SK-N-SH (cell line): ENCODE measurements at regions of chr7 and their contacts with region 1.

Region 1: GRCh38 chr7:106176414-106177299 is 64.5 kb upstream of the SYPL1 start:
- DNase-seq: peak; percentile 88
- H3K4me3 ChIP-seq: no peak overlapping the region
- H3K27ac ChIP-seq: no peak overlapping the region
- H3K4me1 ChIP-seq: peaks cover 4 to 7% of the 10 kb centered on the region in 2 experiments; a peak in 2 of 4 replicates
- H3K27me3 ChIP-seq: no peaks in the 10 kb centered on the region
- CTCF ChIP-seq: peak; percentile 99
- EP300 ChIP-seq: no peak
- RAD21 ChIP-seq: peak; percentile 100

Region 2: GRCh38 chr7:106153891-106154449 is 22.7 kb before region 1 on chr7:
- CTCF ChIA-PET with region 1: interaction called, 199 read pairs
- POLR2A ChIA-PET with region 1: no interaction called
- DNase-seq: peak; percentile 86
- H3K4me3 ChIP-seq: no peak overlapping the region; a peak in 1 of 4 replicates
- H3K27ac ChIP-seq: no peak overlapping the region
- H3K4me1 ChIP-seq: peaks cover 10 to 19% of the 10 kb centered on the region in 2 experiments; a peak in 2 of 4 replicates
- H3K27me3 ChIP-seq: no peaks in the 10 kb centered on the region; the same call in 1 of the 2 replicates
- CTCF ChIP-seq: peak; percentile 100
- EP300 ChIP-seq: no peak
- RAD21 ChIP-seq: peak; percentile 100

Region 3: GRCh38 chr7:106216517-106216922 is 39.9 kb after region 1 on chr7:
- CTCF ChIA-PET with region 1: interaction called, 22 read pairs
- POLR2A ChIA-PET with region 1: no interaction called
- DNase-seq: no peak
- H3K4me3 ChIP-seq: peak overlapping the region in 1 of 2 experiments; percentile 4; a peak in 1 of 4 replicates
- H3K27ac ChIP-seq: peak overlapping the region; percentile 28 to 92; a peak in 3 of 4 replicates
- H3K4me1 ChIP-seq: peaks cover 4 to 15% of the 10 kb centered on the region in 2 experiments; a peak in 3 of 4 replicates
- H3K27me3 ChIP-seq: no peaks in the 10 kb centered on the region
- CTCF ChIP-seq: no peak
- EP300 ChIP-seq: peak in 1 of 2 experiments; percentile 96; a peak in 2 of 4 replicates
- RAD21 ChIP-seq: no peak

Region 4: DNA sequence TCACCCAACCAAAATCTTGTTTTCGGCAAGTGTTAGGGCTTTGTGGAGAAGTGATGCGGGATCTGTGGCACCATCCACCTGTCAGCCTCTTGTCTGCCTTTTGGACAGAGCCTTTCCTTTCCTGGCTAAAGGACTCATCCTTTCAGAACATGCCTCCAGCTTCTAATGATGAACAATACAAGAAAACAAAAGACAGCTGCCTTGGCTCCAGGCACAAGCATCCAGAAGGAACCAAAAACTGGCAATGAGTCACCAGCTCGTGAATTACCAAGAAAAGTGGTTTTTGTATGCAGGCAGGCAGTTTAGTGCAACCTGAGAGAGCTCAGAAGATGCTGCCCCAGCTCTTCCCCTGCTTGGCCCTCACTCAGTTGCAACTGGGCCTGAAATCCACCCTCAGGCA is 192.7 kb after region 1 on chr7:
- CTCF ChIA-PET with region 1: interaction called, 10 read pairs
- POLR2A ChIA-PET with region 1: no interaction called
- DNase-seq: no peak
- H3K4me3 ChIP-seq: no peak overlapping the region
- H3K27ac ChIP-seq: no peak overlapping the region
- H3K4me1 ChIP-seq: peaks cover 0 to 3% of the 10 kb centered on the region in 2 experiments; a peak in 1 of 4 replicates
- H3K27me3 ChIP-seq: no peaks in the 10 kb centered on the region
- CTCF ChIP-seq: no peak
- EP300 ChIP-seq: no peak
- RAD21 ChIP-seq: no peak

Region 5: DNA sequence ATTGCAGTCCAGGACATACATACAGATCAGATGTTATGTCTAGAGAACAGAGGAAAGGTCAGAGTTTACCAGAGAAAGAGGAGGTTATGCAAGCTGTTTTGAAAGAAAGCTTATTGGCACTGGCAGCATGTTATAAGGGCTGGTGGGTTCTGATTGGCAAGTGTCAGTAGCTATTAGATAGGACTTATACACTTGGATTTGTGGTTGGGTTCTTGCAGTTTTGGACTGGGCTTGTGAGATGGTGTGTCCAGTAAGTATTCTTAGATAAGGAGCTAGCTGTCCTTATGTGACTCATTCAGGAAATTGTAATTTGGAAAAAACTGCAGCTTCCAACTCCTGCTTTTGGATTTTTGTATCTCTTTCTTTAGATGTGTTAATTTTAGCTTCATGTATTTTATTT is 238.8 kb after region 1 on chr7:
- CTCF ChIA-PET with region 1: interaction called, 15 read pairs
- POLR2A ChIA-PET with region 1: no interaction called
- DNase-seq: no peak
- H3K4me3 ChIP-seq: no peak overlapping the region
- H3K27ac ChIP-seq: no peak overlapping the region
- H3K4me1 ChIP-seq: no peaks in the 10 kb centered on the region
- H3K27me3 ChIP-seq: no peaks in the 10 kb centered on the region
- CTCF ChIP-seq: no peak
- EP300 ChIP-seq: no peak
- RAD21 ChIP-seq: no peak

Region 6: DNA sequence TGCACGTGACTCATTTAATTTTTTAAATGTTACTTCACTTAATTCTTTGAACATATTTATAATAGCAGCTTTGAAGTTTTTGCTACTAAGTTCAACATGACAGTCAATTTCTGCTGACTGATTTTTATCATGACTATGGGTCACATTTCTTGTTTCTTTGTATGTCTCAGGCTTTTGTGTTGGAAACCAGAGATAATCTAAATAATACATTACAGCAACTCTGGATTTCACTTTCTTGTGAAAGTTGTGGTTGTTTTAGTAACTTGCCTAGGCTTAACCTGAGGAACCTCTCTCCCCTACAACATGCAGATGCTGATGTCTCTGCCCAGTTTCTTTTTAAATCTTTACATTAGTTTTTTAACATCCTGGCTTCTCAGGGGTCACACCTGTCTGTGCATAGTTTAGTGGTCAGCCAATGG is 303.5 kb after region 1 on chr7:
- CTCF ChIA-PET with region 1: interaction called, 12 read pairs
- POLR2A ChIA-PET with region 1: no interaction called
- DNase-seq: no peak
- H3K4me3 ChIP-seq: no peak overlapping the region
- H3K27ac ChIP-seq: no peak overlapping the region
- H3K4me1 ChIP-seq: peaks cover 0 to 6% of the 10 kb centered on the region in 2 experiments
- H3K27me3 ChIP-seq: no peaks in the 10 kb centered on the region
- CTCF ChIP-seq: no peak
- EP300 ChIP-seq: no peak
- RAD21 ChIP-seq: no peak

Region 7: GRCh38 chr7:106757846-106758245 is 581.2 kb after region 1 on chr7:
- CTCF ChIA-PET with region 1: interaction called, 12 read pairs
- POLR2A ChIA-PET with region 1: no interaction called
- DNase-seq: no peak
- H3K4me3 ChIP-seq: no peak overlapping the region
- H3K27ac ChIP-seq: no peak overlapping the region; a peak in 1 of 4 replicates
- H3K4me1 ChIP-seq: peaks cover 8% of the 10 kb centered on the region in 2 experiments; a peak in 3 of 4 replicates
- H3K27me3 ChIP-seq: no peaks in the 10 kb centered on the region
- CTCF ChIP-seq: no peak
- EP300 ChIP-seq: no peak
- RAD21 ChIP-seq: no peak

Region 8: DNA sequence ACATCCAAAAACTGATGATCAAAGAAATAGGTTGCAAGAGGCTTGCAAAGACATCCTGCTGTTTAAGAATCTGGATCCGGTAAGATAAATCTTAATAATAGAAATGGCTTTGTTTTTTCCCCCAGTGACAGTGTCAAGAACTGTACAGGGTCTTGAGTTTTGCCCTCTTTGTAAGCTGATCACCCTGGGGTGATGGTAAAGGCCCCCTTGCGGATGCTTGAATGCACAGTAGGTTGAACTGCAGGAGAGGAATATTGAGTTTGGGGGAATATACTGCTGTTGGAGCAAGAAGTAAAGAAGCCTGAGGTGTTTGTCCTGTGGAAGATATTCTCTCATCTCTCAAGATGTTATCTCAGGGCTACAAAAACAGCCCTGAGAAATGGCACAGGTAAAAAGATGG is 951.6 kb after region 1 on chr7:
- CTCF ChIA-PET with region 1: no interaction called
- POLR2A ChIA-PET with region 1: no interaction called
- DNase-seq: no peak
- H3K4me3 ChIP-seq: no peak overlapping the region
- H3K27ac ChIP-seq: no peak overlapping the region
- H3K4me1 ChIP-seq: no peaks in the 10 kb centered on the region; a peak in 1 of 4 replicates
- H3K27me3 ChIP-seq: no peaks in the 10 kb centered on the region
- CTCF ChIP-seq: no peak
- EP300 ChIP-seq: no peak
- RAD21 ChIP-seq: no peak